ENCODE measurements at regions of chr3 and their contacts with region 1.

Region 1: GRCh38 chr3:94062431-94063404 is at the starts of genes DHFR2 and NSUN3:
- DNase-seq: peak; percentile 96
- ATAC-seq: peak; percentile 96 to 98
- total RNA-seq, gene DHFR2: 3.8 to 4.0 TPM
- total RNA-seq, gene NSUN3: 6.6 to 9.8 TPM

Region 2: GRCh38 chr3:93906245-93906644 is 156.5 kb before region 1 on chr3:
- intact Hi-C with region 1: loop called in 1 of 2 experiments (anchors 10 kb)
- DNase-seq: peak; percentile 31
- ATAC-seq: peak; percentile 84 to 85

Region 3: GRCh38 chr3:94004301-94004910 is 58.3 kb before region 1 on chr3:
- intact Hi-C with region 1: loop called (anchors 2 to 10 kb)
- DNase-seq: no peak
- ATAC-seq: peak; percentile 62 to 74

Measured in left cardiac atrium (tissue), 4 donors.